GM12878 (cell line): ENCODE measurements at regions of chr3 and their contacts with region 1.

Region 1: GRCh38 chr3:103813957-103814356 is 1379.1 kb downstream of the ZPLD1 start:
- DNase-seq: no peak
- ATAC-seq: no peak
- H3K4me3 ChIP-seq: no peak overlapping the region
- H3K27ac ChIP-seq: no peak overlapping the region
- H3K4me1 ChIP-seq: no peaks in the 10 kb centered on the region
- H3K27me3 ChIP-seq: no peaks in the 10 kb centered on the region
- CTCF ChIP-seq: no peak
- EP300 ChIP-seq: no peak
- POLR2A ChIP-seq: no peak
- RAD21 ChIP-seq: no peak

Region 2: DNA sequence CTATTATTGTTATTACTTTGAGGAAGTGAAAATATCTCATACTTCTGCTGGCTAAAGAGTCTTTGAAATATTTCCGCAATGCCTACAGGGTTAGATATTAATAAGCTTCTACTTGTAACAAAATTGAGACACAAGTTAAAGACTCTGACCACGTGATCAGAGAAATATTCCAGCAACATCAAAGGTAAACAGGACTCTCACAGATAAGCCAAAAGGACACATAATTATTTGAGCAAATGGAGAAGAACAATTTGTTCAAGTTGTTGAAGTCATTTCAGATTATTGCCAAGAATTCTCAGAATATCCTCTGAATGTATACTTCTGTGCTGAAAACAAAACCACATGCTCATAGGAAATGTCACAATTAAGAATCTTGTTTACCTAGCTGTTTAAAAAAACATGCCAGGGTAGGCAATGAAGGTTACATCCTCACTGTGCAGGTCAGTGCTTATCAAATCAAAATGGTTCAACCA is 1327.0 kb after region 1 on chr3:
- CTCF ChIA-PET with region 1: no interaction called
- POLR2A ChIA-PET with region 1: interaction called, 11 read pairs
- RAD21 ChIA-PET with region 1: no interaction called
- SMC1A ChIA-PET with region 1: no interaction called
- in situ Hi-C with region 1: no loop called
- intact Hi-C with region 1: no loop called
- DNase-seq: no peak
- ATAC-seq: peak; percentile 50
- H3K4me3 ChIP-seq: no peak overlapping the region
- H3K27ac ChIP-seq: no peak overlapping the region
- H3K4me1 ChIP-seq: no peaks in the 10 kb centered on the region; the same call in 1 of the 2 replicates
- H3K27me3 ChIP-seq: no peaks in the 10 kb centered on the region
- CTCF ChIP-seq: no peak
- EP300 ChIP-seq: no peak
- POLR2A ChIP-seq: no peak
- RAD21 ChIP-seq: no peak